ENCODE measurements at regions of chr3 and their contacts with region 1.

Region 1: GRCh38 chr3:120742198-120742849 is at the starts of genes GTF2E1 and RABL3:
- DNase-seq: peak; percentile 98 to 100 (median 99)
- H3K4me3 ChIP-seq: peak within 1 kb of the TSS; percentile 84 to 99 (median 99)
- H3K4me3 Mint-ChIP-seq: peak within 1 kb of the TSS; percentile 94 to 98
- H3K27ac ChIP-seq: peak within 1 kb of the TSS; percentile 80 to 100
- H3K27ac Mint-ChIP-seq: peak within 1 kb of the TSS; percentile 98 to 100 (median 99)
- H3K4me1 ChIP-seq: peaks cover 17 to 18% of the 10 kb centered on the region in 2 donors
- H3K4me1 Mint-ChIP-seq: peaks cover 21% of the 10 kb centered on the region
- H3K27me3 ChIP-seq: no peaks in the 10 kb centered on the region
- H3K27me3 Mint-ChIP-seq: peaks cover 0 to 2% (median 0%) of the 10 kb centered on the region in 3 donors
- CTCF ChIP-seq: no peak
- polyA plus RNA-seq, gene GTF2E1: 6.1 to 7.9 (median 6.9) TPM
- polyA plus RNA-seq, gene RABL3: 2.0 to 14.9 (median 11.5) TPM

Region 2: DNA sequence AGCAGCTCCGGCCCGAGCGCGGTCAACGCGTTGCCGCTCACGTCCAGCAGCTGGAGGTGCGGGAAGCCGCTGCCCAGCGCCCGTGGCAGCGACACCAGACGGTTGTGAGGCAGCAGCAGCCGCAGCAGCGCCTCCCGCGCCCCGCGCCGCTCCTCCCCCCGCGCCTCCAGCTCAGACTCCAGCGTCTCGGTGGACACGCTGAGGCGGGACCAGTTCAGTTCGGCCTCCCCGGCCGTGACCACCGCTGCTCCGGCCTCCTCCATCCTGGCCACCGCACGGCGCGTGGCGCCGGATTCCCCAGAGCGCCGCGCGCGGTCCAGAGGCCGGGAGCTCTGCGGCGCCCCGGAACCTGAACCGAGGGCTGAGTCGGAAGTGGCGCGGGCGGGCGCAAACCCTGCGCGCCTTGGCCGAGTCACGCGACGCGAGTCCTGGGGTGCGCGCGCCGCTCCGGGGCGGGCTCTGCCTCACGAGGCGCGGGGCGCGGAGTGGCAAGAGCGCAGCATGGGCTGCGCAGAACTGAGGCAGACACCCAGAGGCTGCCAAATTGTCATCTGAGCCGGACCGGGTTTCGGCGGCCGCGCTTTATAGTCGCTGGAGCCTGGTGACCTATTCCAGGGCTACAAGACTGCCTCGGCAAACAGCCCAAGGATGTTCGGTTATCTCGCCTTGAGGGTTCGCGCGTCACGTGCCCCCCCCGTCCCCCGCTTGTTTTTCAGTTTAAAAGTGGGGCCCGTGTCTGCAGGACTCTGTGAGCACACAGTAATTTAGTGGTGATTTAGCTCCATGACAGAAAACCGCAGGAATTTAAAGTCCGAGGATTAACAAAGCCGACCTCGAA is 393.1 kb before region 1 on chr3 and contains the start of gene LRRC58:
- intact Hi-C with region 1: loop called in 1 of 2 experiments (anchors 10 kb)
- DNase-seq: peak; percentile 85 to 89 (median 87)
- H3K4me3 ChIP-seq: peak within 1 kb of the TSS; percentile 78 to 95 (median 88)
- H3K4me3 Mint-ChIP-seq: peak within 1 kb of the TSS; percentile 95
- H3K27ac ChIP-seq: peak within 1 kb of the TSS; percentile 67 to 89
- H3K27ac Mint-ChIP-seq: peak within 1 kb of the TSS; percentile 75 to 93 (median 89)
- H3K4me1 ChIP-seq: peaks cover 20 to 31% of the 10 kb centered on the region in 2 donors
- H3K4me1 Mint-ChIP-seq: peaks cover 51% of the 10 kb centered on the region
- H3K27me3 ChIP-seq: no peaks in the 10 kb centered on the region
- H3K27me3 Mint-ChIP-seq: peaks cover 0 to 2% (median 0%) of the 10 kb centered on the region in 3 donors
- CTCF ChIP-seq: no peak
- polyA plus RNA-seq, gene LRRC58: 6.5 to 12.4 (median 8.3) TPM

Region 3: DNA sequence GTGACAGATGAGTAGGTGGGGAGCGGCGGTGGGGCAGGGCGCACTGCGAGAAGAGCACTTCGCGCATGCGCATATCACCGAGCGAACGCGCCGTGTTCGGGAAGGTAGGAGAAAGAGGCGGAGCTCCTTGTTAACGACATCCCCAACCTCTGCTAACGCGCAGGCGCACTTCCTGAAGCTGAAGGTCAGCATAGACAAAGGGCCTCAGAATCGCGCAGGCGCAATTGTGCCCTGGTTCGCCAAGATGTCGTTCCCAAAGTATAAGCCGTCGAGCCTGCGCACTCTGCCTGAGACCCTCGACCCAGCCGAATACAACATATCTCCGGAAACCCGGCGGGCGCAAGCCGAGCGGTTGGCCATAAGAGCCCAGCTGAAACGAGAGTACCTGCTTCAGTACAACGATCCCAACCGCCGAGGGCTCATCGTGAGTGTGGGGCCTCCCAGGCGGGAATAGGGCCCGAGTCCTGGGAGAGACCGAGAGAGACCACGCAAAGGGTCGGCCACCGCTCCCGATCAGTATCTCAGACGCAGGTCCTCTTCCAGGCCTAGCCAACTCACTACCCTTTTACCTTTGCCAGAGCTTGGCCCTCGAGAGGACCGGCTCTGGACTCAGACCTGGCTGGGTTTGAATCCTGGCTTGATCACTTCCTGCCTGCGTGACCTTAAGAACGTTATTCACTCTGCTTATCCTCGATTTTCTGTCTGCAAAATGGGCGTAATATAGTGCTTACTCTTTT is 146.0 kb before region 1 on chr3 and contains the start of gene NDUFB4:
- intact Hi-C with region 1: loop called (anchors 5 to 10 kb)
- DNase-seq: peak; percentile 97 to 100 (median 99)
- H3K4me3 ChIP-seq: peak within 1 kb of the TSS; percentile 68 to 92 (median 86)
- H3K4me3 Mint-ChIP-seq: peak within 1 kb of the TSS; percentile 85 to 97
- H3K27ac ChIP-seq: peak within 1 kb of the TSS; percentile 73 to 96
- H3K27ac Mint-ChIP-seq: peak within 1 kb of the TSS; percentile 91 to 96 (median 94)
- H3K4me1 ChIP-seq: peaks cover 11 to 19% of the 10 kb centered on the region in 2 donors
- H3K4me1 Mint-ChIP-seq: peaks cover 26% of the 10 kb centered on the region
- H3K27me3 ChIP-seq: no peaks in the 10 kb centered on the region
- H3K27me3 Mint-ChIP-seq: peaks cover 1 to 3% (median 2%) of the 10 kb centered on the region in 3 donors
- CTCF ChIP-seq: no peak
- polyA plus RNA-seq, gene NDUFB4: 93.7 to 215 (median 173) TPM

Region 4: GRCh38 chr3:120795017-120795648 is 52.8 kb after region 1 on chr3:
- intact Hi-C with region 1: no loop called
- DNase-seq: peak; percentile 43 to 66 (median 63)
- H3K4me3 ChIP-seq: no peak overlapping the region
- H3K4me3 Mint-ChIP-seq: no peak overlapping the region
- H3K27ac ChIP-seq: no peak overlapping the region
- H3K27ac Mint-ChIP-seq: no peak overlapping the region
- H3K4me1 ChIP-seq: no peaks in the 10 kb centered on the region
- H3K4me1 Mint-ChIP-seq: no peaks in the 10 kb centered on the region
- H3K27me3 ChIP-seq: peaks cover 0 to 2% of the 10 kb centered on the region in 2 donors
- H3K27me3 Mint-ChIP-seq: peaks cover 0 to 4% (median 4%) of the 10 kb centered on the region in 3 donors
- CTCF ChIP-seq: peak; percentile 81

Region 5: DNA sequence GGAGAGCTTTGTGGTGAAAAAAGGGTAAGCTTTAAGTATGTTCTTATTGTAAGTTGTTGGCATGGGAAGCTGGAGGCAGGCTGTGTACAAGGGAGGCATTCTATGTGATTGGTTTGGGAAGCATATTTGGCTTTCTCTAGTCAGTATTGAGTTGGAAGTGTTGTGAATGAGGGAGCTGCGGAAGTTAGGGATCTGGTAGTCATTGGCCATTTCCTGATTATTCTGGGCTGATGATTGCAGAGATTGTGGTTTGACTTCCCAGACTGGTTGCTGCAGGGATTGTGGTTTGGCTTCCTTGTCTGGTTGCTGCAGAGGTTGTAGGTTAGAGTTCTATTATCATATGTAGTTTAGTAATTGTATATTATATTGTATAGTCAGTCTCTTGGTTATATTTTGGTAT is 186.7 kb after region 1 on chr3:
- intact Hi-C with region 1: no loop called
- DNase-seq: no peak
- H3K4me3 ChIP-seq: no peak overlapping the region
- H3K4me3 Mint-ChIP-seq: no peak overlapping the region
- H3K27ac ChIP-seq: no peak overlapping the region
- H3K27ac Mint-ChIP-seq: no peak overlapping the region
- H3K4me1 ChIP-seq: no peaks in the 10 kb centered on the region
- H3K4me1 Mint-ChIP-seq: no peaks in the 10 kb centered on the region
- H3K27me3 ChIP-seq: no peaks in the 10 kb centered on the region
- H3K27me3 Mint-ChIP-seq: no peaks in the 10 kb centered on the region
- CTCF ChIP-seq: no peak